H1 (cell line): ENCODE measurements at regions of chr5 and their contacts with region 1.

Region 1: GRCh38 chr5:134086943-134087305 is 27.6 kb upstream of the TCF7 start:
- DNase-seq: no peak
- H3K4me3 ChIP-seq: no peak overlapping the region
- H3K27ac ChIP-seq: no peak overlapping the region
- H3K4me1 ChIP-seq: peaks cover 0 to 6% (median 1%) of the 10 kb centered on the region in 4 experiments; a peak in 4 of 7 replicates
- H3K27me3 ChIP-seq: peaks cover 0 to 2% (median 0%) of the 10 kb centered on the region in 4 experiments; a peak in 1 of 7 replicates
- CTCF ChIP-seq: no peak
- EP300 ChIP-seq: no peak
- POLR2A ChIP-seq: no peak
- RAD21 ChIP-seq: no peak

Region 2: DNA sequence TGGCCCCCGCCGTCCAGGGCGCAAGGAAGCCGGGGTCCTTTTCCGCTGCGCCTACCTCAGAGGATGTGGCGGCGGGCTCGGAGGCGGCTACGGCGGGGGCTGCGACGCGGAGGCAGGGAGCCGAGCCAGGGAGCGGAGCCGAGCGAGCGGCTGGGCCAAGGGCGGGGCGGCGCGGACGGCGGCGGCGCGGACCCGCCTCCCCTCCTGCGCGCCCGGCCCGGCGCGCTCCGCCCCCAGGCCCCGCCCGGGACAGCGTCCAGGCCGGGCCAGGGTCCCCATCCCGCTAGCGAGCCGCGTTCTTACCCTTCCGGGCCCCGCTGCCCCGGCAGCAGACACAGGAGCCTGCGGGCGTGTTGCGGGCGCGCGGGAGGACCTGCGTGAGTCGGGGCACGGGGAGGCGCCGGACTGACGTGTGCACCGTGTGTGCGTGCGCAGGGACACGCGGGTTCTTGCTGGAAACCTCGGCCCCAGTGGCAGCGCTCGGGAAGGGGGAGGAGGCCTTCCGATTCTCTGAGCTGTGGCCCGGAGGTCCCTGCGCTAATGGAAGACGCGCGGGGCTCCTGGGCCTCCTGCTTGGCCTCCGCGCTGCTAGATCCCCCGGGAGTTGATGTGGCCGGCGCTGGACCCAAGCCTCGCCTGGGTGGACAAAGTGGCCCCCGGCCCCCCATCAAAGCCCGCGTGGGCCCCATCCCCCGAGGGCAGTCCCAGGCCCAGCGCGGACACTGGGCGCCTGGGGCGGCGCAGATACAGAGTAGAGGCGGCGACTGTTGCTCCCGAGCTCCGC is 82.1 kb before region 1 on chr5 and contains the start of gene VDAC1:
- CTCF ChIA-PET with region 1: no interaction called
- POLR2A ChIA-PET with region 1: no interaction called
- DNase-seq: peak in 1 of 2 experiments; percentile 82
- H3K4me3 ChIP-seq: peak within 1 kb of the TSS; percentile 52 to 90 (median 66)
- H3K27ac ChIP-seq: peak within 1 kb of the TSS; percentile 84; the same call in 1 of the 2 replicates
- H3K4me1 ChIP-seq: peaks cover 6 to 30% (median 14%) of the 10 kb centered on the region in 4 experiments
- H3K27me3 ChIP-seq: no peaks in the 10 kb centered on the region
- CTCF ChIP-seq: no peak
- EP300 ChIP-seq: no peak
- POLR2A ChIP-seq: peak in 1 of 2 experiments; percentile 56; a peak in 2 of 3 replicates
- RAD21 ChIP-seq: no peak
- total RNA-seq, gene VDAC1: 285 and 301 TPM in 2 replicates

Region 3: GRCh38 chr5:134070725-134071613 is 16.0 kb before region 1 on chr5:
- CTCF ChIA-PET with region 1: interaction called, 19 read pairs
- POLR2A ChIA-PET with region 1: interaction called, 3 read pairs
- DNase-seq: peak in 1 of 2 experiments; percentile 75
- H3K4me3 ChIP-seq: peak overlapping the region; percentile 14 to 57 (median 46)
- H3K27ac ChIP-seq: no peak overlapping the region
- H3K4me1 ChIP-seq: peaks cover 0 to 7% (median 2%) of the 10 kb centered on the region in 4 experiments; a peak in 4 of 7 replicates
- H3K27me3 ChIP-seq: peaks cover 0 to 8% (median 3%) of the 10 kb centered on the region in 4 experiments; a peak in 4 of 7 replicates
- CTCF ChIP-seq: peak; percentile 24 to 47 (median 30); a peak in 3 of 4 replicates
- EP300 ChIP-seq: no peak
- POLR2A ChIP-seq: no peak
- RAD21 ChIP-seq: peak; percentile 40 to 49